K562 (cell line): ENCODE measurements at regions of chr1 and their contacts with region 1.

Region 1: GRCh38 chr1:93001893-93002292 is 40.6 kb upstream of the DIPK1A start:
- DNase-seq: no peak
- ATAC-seq: peak; percentile 70; the same call in 2 of the 3 replicates
- H3K4me3 ChIP-seq: no peak overlapping the region
- H3K27ac ChIP-seq: no peak overlapping the region
- H3K4me1 ChIP-seq: no peaks in the 10 kb centered on the region
- H3K27me3 ChIP-seq: no peaks in the 10 kb centered on the region
- CTCF ChIP-seq: peak; percentile 35 to 46 (median 37); a peak in 3 of 6 replicates
- EP300 ChIP-seq: no peak
- POLR2A ChIP-seq: no peak
- RAD21 ChIP-seq: peak in 1 of 2 experiments; percentile 60; a peak in 2 of 4 replicates

Region 2: DNA sequence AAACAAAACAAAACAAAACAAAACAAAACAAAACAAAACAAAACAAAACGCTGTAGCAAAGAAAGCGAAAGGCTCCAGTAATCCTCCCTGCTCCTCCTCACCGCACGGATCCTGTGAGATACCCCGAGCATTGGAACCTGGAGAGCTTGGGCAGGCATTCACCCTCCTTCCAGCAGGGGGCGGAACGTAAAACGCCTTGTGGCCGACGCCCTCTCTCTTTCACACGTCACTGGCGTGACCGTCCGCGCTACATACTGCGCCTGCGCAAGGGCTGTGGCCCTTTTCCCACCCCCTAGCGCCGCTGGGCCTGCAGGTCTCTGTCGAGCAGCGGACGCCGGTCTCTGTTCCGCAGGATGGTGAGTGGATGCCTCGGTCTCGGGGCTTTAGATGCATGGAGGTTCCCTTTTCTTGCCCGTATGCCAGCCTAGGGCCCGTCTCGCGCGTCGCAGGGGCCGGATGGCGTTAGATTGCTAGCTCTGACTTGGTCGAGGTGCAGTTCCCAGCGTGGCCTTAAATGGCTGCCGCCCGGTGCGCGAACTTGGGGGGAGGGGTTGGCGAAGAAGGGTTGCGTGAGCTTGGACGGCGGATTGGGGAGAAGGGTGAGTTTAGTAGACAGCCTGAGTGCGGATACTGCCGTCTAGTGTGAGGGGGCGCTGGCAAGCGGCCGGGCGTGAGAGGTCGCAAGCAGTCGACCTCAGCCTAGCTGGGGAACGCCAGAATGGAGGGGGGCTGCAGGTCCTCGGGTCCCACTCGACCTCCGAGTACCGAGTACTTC is 169.9 kb before region 1 on chr1 and contains the start of gene RPL5:
- CTCF ChIA-PET with region 1: no interaction called
- POLR2A ChIA-PET with region 1: no interaction called
- in situ Hi-C with region 1: no loop called
- intact Hi-C with region 1: no loop called
- DNase-seq: peak; percentile 96 to 99 (median 97)
- ATAC-seq: peak; percentile 90
- H3K4me3 ChIP-seq: peak within 1 kb of the TSS; percentile 91
- H3K27ac ChIP-seq: peak within 1 kb of the TSS; percentile 89
- H3K4me1 ChIP-seq: peaks cover 6 to 18% of the 10 kb centered on the region in 2 experiments; a peak in 3 of 5 replicates
- H3K27me3 ChIP-seq: no peaks in the 10 kb centered on the region
- CTCF ChIP-seq: peak; percentile 93 to 98 (median 97)
- EP300 ChIP-seq: peak; percentile 48; the same call in 1 of the 2 replicates
- POLR2A ChIP-seq: peak; percentile 100
- RAD21 ChIP-seq: peak; percentile 39; a peak in 3 of 4 replicates
- polyA plus RNA-seq, gene RPL5: 4,024 to 4,252 TPM

Region 3: DNA sequence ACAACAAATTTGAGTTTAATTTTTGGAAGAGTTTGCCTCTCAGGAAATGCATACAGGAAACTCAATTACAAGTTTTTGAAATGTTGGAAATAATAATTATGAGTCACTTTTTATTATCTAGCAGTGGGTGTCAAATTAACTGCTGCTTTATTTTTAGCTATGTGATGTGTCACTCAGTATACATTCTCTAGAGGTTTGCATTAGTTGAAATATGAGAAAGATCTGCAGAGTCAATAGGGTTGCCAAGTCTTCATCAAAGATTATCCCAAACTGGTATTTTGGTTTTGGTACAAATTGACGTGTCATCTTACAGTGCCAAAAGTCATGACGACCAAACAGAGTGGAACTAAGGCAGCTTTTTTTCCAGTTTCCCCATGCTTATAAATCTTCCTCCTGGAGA is 13.7 kb after region 1 on chr1:
- CTCF ChIA-PET with region 1: no interaction called
- POLR2A ChIA-PET with region 1: interaction called, 12 read pairs
- in situ Hi-C with region 1: no loop called
- intact Hi-C with region 1: loop called (anchors 1 kb)
- DNase-seq: no peak
- ATAC-seq: no peak
- H3K4me3 ChIP-seq: no peak overlapping the region
- H3K27ac ChIP-seq: no peak overlapping the region
- H3K4me1 ChIP-seq: no peaks in the 10 kb centered on the region; a peak in 1 of 5 replicates
- H3K27me3 ChIP-seq: no peaks in the 10 kb centered on the region
- CTCF ChIP-seq: no peak
- EP300 ChIP-seq: no peak
- POLR2A ChIP-seq: no peak
- RAD21 ChIP-seq: no peak

Region 4: DNA sequence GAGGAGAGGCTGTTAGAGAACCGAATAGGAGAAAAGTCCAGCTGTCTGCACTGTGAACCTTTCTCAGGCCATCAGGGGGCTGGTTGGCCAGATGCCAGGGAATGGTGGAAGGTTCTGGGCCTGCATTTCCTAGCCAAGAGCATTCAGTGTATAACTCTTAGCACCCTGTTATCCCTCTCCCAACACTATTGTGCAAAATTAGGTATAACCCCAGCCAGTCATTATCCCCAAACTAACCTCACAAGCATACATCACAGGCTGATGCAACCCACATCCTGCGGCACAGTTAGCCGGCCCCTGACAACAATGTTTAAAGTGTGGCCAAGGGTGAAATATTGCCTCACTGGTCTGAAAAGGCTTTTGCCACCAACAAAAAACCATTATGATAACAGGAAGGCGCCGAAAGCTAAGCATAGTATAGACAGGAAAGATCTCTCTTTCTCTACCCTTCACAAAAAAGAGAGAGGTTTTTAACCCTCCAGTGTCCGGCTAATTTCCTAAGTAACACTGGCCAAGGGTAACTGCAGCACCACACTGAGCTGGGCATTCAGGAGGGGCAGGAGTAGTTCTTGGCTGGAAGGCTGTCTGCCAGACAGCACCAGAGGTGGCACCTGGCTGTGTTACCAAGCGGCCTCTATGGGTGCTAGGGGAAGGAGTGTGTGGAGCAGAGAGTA is 757.1 kb after region 1 on chr1:
- CTCF ChIA-PET with region 1: no interaction called
- POLR2A ChIA-PET with region 1: no interaction called
- in situ Hi-C with region 1: no loop called
- intact Hi-C with region 1: no loop called
- DNase-seq: no peak
- ATAC-seq: peak; percentile 51
- H3K4me3 ChIP-seq: no peak overlapping the region
- H3K27ac ChIP-seq: no peak overlapping the region
- H3K4me1 ChIP-seq: no peaks in the 10 kb centered on the region
- H3K27me3 ChIP-seq: peaks cover 0 to 14% of the 10 kb centered on the region in 2 experiments; a peak in 2 of 5 replicates
- CTCF ChIP-seq: no peak
- EP300 ChIP-seq: no peak
- POLR2A ChIP-seq: no peak
- RAD21 ChIP-seq: no peak